GM18951 (cell line): ENCODE measurements at regions of chr6 and their contacts with region 1.

Region 1: DNA sequence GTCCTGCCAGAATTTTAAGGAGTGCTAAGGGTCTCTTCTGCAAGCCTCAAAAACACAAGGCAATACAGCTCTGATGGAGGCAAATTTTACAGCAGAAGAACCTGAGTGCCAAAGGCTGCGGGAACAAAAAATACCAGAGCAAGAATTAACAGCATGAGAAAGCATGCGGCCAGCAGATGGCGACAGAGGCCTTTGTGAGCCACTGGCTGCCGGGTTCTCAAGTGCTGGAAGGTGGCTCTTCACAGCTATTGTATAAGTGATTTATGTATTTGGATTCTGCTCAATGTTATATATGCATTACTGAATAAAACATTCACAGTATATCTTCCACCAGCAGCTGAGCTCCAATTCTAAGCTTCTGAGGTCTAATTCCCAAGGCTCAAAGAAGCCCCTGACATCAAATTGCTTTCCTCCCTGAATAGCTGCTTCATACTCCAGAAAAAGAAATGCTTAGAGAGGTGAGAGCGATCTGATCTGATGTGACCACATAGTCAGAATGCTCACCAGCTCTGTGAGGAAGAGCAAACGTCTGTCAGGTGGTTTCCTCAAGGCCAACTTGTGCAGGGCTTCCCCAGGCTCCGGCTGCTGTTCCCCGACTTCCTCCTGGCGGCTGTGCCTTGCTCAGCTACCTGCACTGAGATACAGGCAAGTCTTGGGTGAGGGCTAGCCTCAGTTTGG is 58.6 kb downstream of the PPP1R3G start:
- POLR2A ChIP-seq: no peak

Region 2: GRCh38 chr6:4698901-4699659 is 444.7 kb before region 1 on chr6:
- in situ Hi-C with region 1: no loop called
- POLR2A ChIP-seq: no peak

Region 3: GRCh38 chr6:5231289-5231688 is 87.5 kb after region 1 on chr6:
- in situ Hi-C with region 1: no loop called
- POLR2A ChIP-seq: no peak

Region 4: GRCh38 chr6:5401845-5402738 is 258.3 kb after region 1 on chr6:
- in situ Hi-C with region 1: loop called (anchors 10 kb)
- POLR2A ChIP-seq: no peak